ENCODE measurements at regions of chr11 and their contacts with region 1.

Region 1: DNA sequence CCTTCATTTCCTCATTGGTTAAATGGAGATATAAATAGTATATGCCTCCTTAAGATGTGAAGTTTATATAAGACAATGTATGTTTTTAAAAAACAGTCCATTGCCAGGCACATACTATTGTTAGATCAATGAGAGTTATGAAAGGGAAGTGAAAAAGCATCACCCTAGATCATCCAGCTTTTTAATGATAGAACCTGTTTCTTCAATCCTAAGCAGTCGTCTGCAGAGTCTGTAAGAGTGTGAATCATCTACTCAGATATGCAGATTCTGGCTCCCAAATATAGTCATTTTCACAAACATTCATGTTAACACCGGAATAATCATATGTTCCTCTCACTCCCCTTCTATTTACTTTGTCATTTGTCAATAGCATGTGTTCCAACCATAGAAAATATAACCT is 65.3 kb upstream of the SLN start:
- DNase-seq: peak; percentile 47
- CTCF ChIP-seq: no peak

Region 2: DNA sequence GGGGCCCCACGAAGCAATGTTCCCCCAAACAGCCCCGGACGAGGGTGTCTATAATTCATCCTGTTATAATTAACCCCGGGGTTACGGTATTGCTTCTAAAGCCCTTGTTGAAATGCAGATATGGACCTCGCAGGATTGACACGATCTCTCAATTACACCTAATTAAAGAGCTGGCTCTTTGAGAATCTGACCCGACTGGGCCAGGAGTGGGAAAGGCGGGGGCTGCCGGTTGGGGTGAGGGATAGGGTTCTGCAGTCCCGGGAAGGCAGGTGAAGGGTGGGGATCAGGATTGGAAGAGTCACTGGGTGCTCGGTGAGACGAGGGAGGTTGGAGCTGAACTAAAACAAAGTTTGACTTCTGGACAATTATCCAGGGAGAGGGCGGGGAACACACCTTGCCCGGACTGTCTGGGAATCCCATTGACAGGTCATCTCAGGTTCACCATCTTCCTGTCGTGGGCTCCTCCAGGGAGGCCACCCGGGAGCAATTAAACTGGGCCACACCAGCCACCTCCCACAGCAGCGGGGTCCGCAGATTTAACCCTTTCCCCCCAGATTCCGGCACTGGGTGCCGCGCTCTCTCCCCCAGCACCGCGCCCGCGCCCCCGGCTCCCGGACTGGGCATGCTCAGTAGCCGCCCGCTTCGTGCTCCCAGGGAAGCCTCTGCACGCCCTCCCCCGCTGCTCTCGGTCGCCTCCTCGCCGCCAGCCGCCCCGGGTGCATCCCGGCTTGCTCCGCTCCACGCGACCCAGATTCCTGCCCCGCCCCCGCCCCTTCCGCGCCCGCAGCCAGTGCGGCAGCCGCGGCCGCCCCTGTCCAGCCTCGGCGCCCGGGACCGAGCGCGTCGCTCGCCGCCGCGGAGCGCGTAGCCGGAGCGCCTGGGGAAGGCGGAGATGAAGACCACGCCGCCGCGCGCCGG is 186.4 kb before region 1 on chr11 and contains the start of gene ELMOD1:
- CTCF ChIA-PET with region 1: no interaction called
- POLR2A ChIA-PET with region 1: no interaction called
- DNase-seq: peak; percentile 67
- CTCF ChIP-seq: no peak

Region 3: GRCh38 chr11:107791343-107792048 is 14.4 kb after region 1 on chr11:
- CTCF ChIA-PET with region 1: interaction called, 12 read pairs
- POLR2A ChIA-PET with region 1: no interaction called
- DNase-seq: no peak
- CTCF ChIP-seq: no peak

Measured in GM10248 (cell line).